ENCODE measurements at regions of chr12 and their contacts with region 1.

Region 1: GRCh38 chr12:112599871-112600270 is 181.1 kb downstream of the PTPN11 start:
- DNase-seq: no peak
- H3K4me3 ChIP-seq: no peak overlapping the region
- H3K4me1 ChIP-seq: peaks cover 42% of the 10 kb centered on the region
- H3K27me3 ChIP-seq: no peaks in the 10 kb centered on the region

Region 2: DNA sequence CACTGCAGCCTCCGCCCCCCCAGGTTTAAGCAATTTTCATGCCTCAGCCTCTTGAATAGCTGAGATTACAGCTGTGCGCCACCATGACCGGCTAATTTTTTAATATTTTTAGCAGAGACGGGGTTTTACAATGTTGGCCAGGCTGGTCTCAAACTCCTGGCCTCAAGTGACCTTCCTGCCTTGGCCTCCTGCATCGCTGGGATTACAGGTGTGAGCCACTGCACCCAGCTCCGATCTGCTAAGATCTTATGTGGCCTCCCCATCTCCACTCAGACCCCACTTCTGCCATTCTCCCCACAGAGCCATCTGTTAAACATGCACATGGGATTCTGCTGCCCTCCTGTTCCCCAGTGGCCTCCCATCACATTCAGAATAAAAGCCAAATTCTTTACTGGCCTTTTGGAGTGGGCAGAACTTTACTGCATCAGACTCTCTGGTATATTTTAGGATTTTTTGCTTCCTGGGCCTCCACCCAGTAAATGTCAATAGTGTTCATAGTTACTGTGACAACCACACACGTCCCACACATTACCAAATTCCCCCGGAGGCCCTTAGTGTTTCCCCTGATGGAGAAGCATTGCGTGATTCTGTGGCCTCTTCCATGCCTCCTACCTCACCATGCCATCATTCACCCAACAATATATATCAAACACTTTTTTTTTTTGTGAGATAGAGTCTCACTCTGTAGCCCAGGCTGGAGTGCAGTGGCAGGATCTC is 84.8 kb before region 1 on chr12:
- in situ Hi-C with region 1: loop called (anchors 5 kb)
- DNase-seq: no peak
- H3K4me3 ChIP-seq: no peak overlapping the region
- H3K4me1 ChIP-seq: peaks cover 37% of the 10 kb centered on the region
- H3K27me3 ChIP-seq: no peaks in the 10 kb centered on the region

Measured in HAP-1 (cell line).